Psoas muscle (tissue), 8 donors: ENCODE measurements at regions of chr17 and their contacts with region 1.

Region 1: GRCh38 chr17:38557836-38558727 is 47.7 kb downstream of the SRCIN1 start:
- DNase-seq: peak; percentile 94 to 96
- ATAC-seq: peak; percentile 90 to 98 (median 94)
- H3K4me3 ChIP-seq: peak overlapping the region; percentile 57
- H3K27ac ChIP-seq: no peak overlapping the region
- H3K4me1 ChIP-seq: peaks cover 12% of the 10 kb centered on the region
- H3K27me3 ChIP-seq: peaks cover 0 to 45% (median 27%) of the 10 kb centered on the region in 3 donors
- CTCF ChIP-seq: peak; percentile 84

Region 2: DNA sequence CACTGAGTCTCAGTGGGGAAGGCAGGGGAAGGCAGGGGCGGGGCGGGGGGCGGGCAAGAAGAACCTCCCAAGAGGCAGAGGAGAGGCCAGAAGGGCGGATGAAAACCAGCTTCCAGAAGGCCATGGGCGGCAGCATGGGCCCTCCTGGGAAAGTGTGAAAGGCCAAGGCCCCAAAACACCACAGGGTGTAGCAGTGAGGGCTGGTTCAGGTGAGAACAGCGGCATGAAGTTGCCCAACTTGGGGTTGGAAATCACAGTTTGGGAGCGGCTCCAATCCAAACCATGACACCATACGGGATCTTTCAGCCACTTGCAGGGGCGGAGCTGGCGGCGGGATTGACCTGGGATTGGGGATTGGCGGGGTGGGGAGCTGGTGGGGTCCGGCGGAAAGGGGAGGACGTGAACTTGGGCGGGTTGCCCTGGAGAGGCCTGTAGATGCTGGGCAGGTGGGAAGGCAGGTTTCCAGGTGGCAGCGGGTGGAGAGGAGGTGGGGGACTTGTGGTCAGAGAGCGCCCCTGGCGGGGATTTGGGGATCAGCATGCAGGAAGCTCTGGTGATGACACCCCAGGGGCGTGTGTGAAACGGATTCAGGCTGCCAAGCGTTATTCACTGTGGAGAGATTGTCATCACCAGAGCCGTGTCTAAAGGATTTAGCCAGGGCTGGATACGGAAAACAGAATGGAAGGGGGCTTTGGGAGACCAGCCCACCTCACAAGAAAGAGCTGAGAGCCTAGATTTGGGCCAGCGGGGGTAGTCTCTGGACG is 48.9 kb before region 1 on chr17:
- intact Hi-C with region 1: no loop called
- DNase-seq: peak; percentile 78 to 88
- ATAC-seq: peak; percentile 60 to 78 (median 72)
- H3K4me3 ChIP-seq: no peak overlapping the region
- H3K27ac ChIP-seq: no peak overlapping the region
- H3K4me1 ChIP-seq: no peaks in the 10 kb centered on the region
- H3K27me3 ChIP-seq: peaks cover 0 to 21% (median 2%) of the 10 kb centered on the region in 3 donors
- CTCF ChIP-seq: peak; percentile 51

Region 3: GRCh38 chr17:38584350-38584925 is 26.4 kb after region 1 on chr17:
- intact Hi-C with region 1: loop called in 1 of 2 experiments (anchors 2 kb)
- DNase-seq: peak; percentile 75
- ATAC-seq: peak; percentile 85 to 97 (median 90)
- H3K4me3 ChIP-seq: no peak overlapping the region
- H3K27ac ChIP-seq: no peak overlapping the region
- H3K4me1 ChIP-seq: peaks cover 4% of the 10 kb centered on the region
- H3K27me3 ChIP-seq: peaks cover 0 to 51% (median 5%) of the 10 kb centered on the region in 3 donors
- CTCF ChIP-seq: peak; percentile 88

Region 4: DNA sequence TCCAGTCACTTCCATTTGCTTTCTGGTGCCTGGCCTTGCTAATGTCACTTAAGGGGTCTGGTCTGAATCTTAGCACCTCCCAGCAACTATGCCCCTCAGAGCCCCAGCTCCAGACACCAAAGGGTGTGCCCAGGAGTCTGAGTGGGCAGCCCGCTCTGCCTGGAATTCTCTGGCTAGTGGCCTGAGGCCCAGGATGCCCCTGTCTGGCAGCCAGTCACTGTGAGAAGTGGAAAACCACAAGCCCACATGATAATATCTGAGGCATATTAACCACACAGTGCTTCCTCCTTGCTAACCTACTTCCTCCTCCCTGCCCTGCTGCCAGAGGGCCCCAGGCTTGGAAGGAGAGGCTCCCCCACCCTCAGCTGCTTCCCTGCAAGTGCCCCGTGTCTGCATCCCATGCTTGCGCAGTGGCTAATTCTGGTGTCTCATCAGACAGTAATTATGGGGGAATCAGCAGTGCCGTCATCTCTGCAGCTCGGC is 33.7 kb after region 1 on chr17:
- intact Hi-C with region 1: loop called in 1 of 2 experiments (anchors 5 kb)
- DNase-seq: no peak
- ATAC-seq: no peak
- H3K4me3 ChIP-seq: no peak overlapping the region
- H3K27ac ChIP-seq: no peak overlapping the region
- H3K4me1 ChIP-seq: no peaks in the 10 kb centered on the region
- H3K27me3 ChIP-seq: peaks cover 0 to 74% (median 15%) of the 10 kb centered on the region in 3 donors
- CTCF ChIP-seq: no peak

Region 5: GRCh38 chr17:38667099-38667786 is 109.2 kb after region 1 on chr17:
- intact Hi-C with region 1: loop called (anchors 1 to 5 kb)
- DNase-seq: peak; percentile 52 to 70
- ATAC-seq: peak; percentile 78 to 91 (median 82)
- H3K4me3 ChIP-seq: no peak overlapping the region
- H3K27ac ChIP-seq: no peak overlapping the region
- H3K4me1 ChIP-seq: no peaks in the 10 kb centered on the region
- H3K27me3 ChIP-seq: peaks cover 0 to 47% (median 5%) of the 10 kb centered on the region in 3 donors
- CTCF ChIP-seq: peak; percentile 98

Region 6: GRCh38 chr17:38711792-38712571 is 153.9 kb after region 1 on chr17:
- intact Hi-C with region 1: no loop called
- DNase-seq: no peak
- ATAC-seq: peak; percentile 46 to 73 (median 58)
- H3K4me3 ChIP-seq: no peak overlapping the region
- H3K27ac ChIP-seq: peak overlapping the region; percentile 58
- H3K4me1 ChIP-seq: peaks cover 50% of the 10 kb centered on the region
- H3K27me3 ChIP-seq: no peaks in the 10 kb centered on the region
- CTCF ChIP-seq: no peak

Region 7: DNA sequence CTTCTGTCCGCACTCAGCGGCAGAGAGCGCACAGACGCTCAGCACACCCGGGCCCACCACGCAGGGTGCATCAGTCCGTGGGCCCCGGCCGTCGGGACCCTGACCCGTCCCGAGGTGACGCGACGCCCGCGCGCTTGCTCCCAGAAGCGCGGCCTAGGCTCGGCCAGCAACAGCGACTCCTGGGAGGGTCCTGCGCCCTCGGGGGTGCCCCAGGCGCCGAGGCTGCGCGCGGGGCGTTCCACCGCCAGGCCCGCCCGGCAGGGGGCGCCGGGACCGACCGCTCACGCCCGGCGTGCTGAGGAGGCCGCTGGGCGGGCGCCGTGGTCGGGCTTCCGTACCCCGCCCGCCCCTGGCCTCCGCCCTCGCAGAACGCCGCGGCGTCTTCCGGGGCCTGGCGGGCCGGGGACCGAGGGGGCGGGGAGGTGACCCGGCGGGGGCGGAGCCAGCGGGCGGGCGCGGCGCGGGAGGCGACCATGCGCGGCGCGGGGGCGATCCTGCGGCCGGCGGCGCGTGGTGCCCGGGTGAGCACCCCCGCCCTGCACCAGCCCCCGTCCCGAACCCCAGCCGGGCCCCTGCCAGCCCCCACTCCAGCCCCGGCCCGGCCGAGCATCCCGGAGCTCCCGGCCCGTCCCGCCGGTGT is 171.9 kb after region 1 on chr17 and contains the start of gene CISD3:
- intact Hi-C with region 1: loop called (anchors 10 kb)
- DNase-seq: peak; percentile 90 to 94
- ATAC-seq: peak; percentile 86 to 91 (median 90)
- H3K4me3 ChIP-seq: peak within 1 kb of the TSS; percentile 72
- H3K27ac ChIP-seq: peak within 1 kb of the TSS; percentile 77
- H3K4me1 ChIP-seq: peaks cover 20% of the 10 kb centered on the region
- H3K27me3 ChIP-seq: no peaks in the 10 kb centered on the region
- CTCF ChIP-seq: peak; percentile 79
- total RNA-seq, gene CISD3: 29.9 to 45.5 (median 37.4) TPM

Region 8: GRCh38 chr17:38815576-38816193 is 257.6 kb after region 1 on chr17:
- intact Hi-C with region 1: no loop called
- DNase-seq: no peak
- ATAC-seq: peak in 2 of 4 donors; percentile 16 to 55
- H3K4me3 ChIP-seq: no peak overlapping the region
- H3K27ac ChIP-seq: no peak overlapping the region
- H3K4me1 ChIP-seq: no peaks in the 10 kb centered on the region
- H3K27me3 ChIP-seq: no peaks in the 10 kb centered on the region
- CTCF ChIP-seq: no peak